ENCODE measurements at regions of chr4 and their contacts with region 1.

Region 1: GRCh38 chr4:88284439-88285234 is at the start of gene PPM1K:
- DNase-seq: peak; percentile 98 to 99 (median 99)
- H3K4me3 ChIP-seq: peak within 1 kb of the TSS; percentile 61 to 89 (median 77)
- H3K4me3 Mint-ChIP-seq: peak within 1 kb of the TSS; percentile 98
- H3K27ac ChIP-seq: peak within 1 kb of the TSS; percentile 92
- H3K27ac Mint-ChIP-seq: peak within 1 kb of the TSS; percentile 96 to 99 (median 98)
- H3K4me1 ChIP-seq: peaks cover 20 to 21% of the 10 kb centered on the region in 2 donors
- H3K4me1 Mint-ChIP-seq: peaks cover 29% of the 10 kb centered on the region
- H3K27me3 ChIP-seq: no peaks in the 10 kb centered on the region
- H3K27me3 Mint-ChIP-seq: no peaks in the 10 kb centered on the region
- CTCF ChIP-seq: no peak
- polyA plus RNA-seq, gene PPM1K: 5.7 to 11.0 (median 7.0) TPM

Region 2: DNA sequence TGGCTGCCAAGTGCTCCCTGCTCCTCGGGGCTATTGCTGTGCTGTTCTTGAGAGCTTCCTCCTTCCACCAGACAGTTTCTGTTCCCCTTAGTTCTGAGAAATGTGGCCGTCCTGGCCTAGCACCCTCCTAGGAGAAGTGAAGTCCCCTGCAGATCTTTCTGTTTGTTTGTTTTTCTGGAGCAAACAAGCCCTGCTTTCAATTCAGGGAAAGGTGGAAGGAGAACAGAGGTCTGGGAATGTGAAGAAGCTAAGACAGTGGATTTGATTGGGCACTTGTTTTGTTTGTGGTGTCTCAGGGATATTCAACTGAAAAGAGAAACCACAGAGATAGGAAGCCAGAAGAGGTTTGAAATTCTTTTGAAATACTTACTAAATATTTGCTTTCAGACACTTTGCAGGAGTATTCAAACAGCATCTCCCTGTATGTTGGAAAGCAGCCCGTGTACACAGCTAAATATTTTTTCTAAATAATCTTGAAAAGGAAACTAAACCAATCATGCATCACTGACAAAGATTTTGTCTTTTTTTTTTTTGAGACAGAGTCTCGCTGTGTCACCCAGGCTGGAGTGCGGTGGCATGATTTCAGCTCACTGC is 36.2 kb after region 1 on chr4:
- intact Hi-C with region 1: no loop called
- DNase-seq: peak; percentile 68 to 72 (median 70)
- H3K4me3 ChIP-seq: peak overlapping the region; percentile 2 to 61 (median 37)
- H3K4me3 Mint-ChIP-seq: peak overlapping the region; percentile 53 to 87
- H3K27ac ChIP-seq: peak overlapping the region; percentile 31 to 88
- H3K27ac Mint-ChIP-seq: peak overlapping the region; percentile 80 to 97 (median 96)
- H3K4me1 ChIP-seq: peaks cover 17 to 20% of the 10 kb centered on the region in 2 donors
- H3K4me1 Mint-ChIP-seq: peaks cover 25% of the 10 kb centered on the region
- H3K27me3 ChIP-seq: no peaks in the 10 kb centered on the region
- H3K27me3 Mint-ChIP-seq: no peaks in the 10 kb centered on the region
- CTCF ChIP-seq: no peak

Region 3: DNA sequence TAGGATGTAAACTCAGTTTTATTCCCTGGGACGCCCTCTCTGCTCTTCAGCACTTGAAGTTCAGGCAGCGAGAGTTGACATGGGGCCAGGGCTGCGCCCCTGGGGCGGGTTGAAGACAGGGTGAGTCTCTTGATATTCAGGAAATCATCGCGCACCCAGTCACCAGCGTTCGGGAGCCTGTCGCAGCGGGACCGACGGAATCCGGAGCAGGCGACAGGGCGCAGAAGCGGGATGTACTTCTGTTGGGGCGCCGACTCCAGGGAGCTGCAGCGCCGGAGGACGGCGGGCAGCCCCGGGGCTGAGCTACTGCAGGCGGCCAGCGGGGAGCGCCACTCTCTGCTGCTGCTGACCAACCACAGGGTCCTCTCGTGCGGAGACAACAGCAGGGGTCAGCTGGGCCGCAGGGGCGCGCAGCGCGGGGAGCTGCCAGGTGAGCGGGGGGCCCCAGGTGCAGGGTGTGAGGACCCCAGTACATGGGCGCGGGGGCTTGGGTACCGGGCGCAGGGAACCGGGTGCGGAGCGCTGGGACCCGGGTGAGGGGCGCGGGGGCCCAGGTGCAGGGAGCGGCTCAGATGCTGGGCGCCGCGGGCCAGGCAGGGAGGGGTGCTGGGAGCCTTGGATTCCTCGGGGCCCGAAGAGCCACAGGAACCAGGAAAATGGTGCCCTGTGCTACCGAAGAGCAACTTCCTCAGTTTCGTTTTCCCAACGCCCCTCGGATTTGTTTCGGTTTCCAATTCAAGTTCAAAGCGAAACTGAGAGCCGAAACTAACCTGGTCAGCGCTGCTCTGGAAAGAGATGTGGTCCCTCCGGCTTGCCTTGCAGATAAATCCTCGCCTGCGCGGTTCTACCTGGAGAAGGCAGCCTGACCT is 94.3 kb after region 1 on chr4 and contains the start of gene HERC6:
- intact Hi-C with region 1: loop called (anchors 5 kb)
- DNase-seq: peak; percentile 88 to 92 (median 91)
- H3K4me3 ChIP-seq: peak within 1 kb of the TSS; percentile 56 to 99 (median 68)
- H3K4me3 Mint-ChIP-seq: peak within 1 kb of the TSS; percentile 93 to 97
- H3K27ac ChIP-seq: peak within 1 kb of the TSS; percentile 63 to 98
- H3K27ac Mint-ChIP-seq: peak within 1 kb of the TSS; percentile 84 to 95 (median 91)
- H3K4me1 ChIP-seq: peaks cover 13 to 19% of the 10 kb centered on the region in 2 donors
- H3K4me1 Mint-ChIP-seq: peaks cover 24% of the 10 kb centered on the region
- H3K27me3 ChIP-seq: no peaks in the 10 kb centered on the region
- H3K27me3 Mint-ChIP-seq: peaks cover 1 to 6% (median 2%) of the 10 kb centered on the region in 3 donors
- CTCF ChIP-seq: peak; percentile 88
- polyA plus RNA-seq, gene HERC6: 4.1 to 9.4 (median 6.1) TPM

Region 4: GRCh38 chr4:88456757-88457306 is 172.2 kb after region 1 on chr4 and contains the start of gene HERC5:
- intact Hi-C with region 1: loop called in 1 of 2 experiments (anchors 5 kb)
- DNase-seq: peak; percentile 91 to 93 (median 92)
- H3K4me3 ChIP-seq: peak within 1 kb of the TSS; percentile 62 to 94 (median 90)
- H3K4me3 Mint-ChIP-seq: peak within 1 kb of the TSS; percentile 100
- H3K27ac ChIP-seq: peak within 1 kb of the TSS; percentile 58 to 79
- H3K27ac Mint-ChIP-seq: peak within 1 kb of the TSS; percentile 94 to 99 (median 97)
- H3K4me1 ChIP-seq: peaks cover 11 to 20% of the 10 kb centered on the region in 2 donors
- H3K4me1 Mint-ChIP-seq: peaks cover 17% of the 10 kb centered on the region
- H3K27me3 ChIP-seq: no peaks in the 10 kb centered on the region
- H3K27me3 Mint-ChIP-seq: no peaks in the 10 kb centered on the region
- CTCF ChIP-seq: peak; percentile 29
- polyA plus RNA-seq, gene HERC5: 2.9 to 10.4 (median 8.1) TPM

Region 5: GRCh38 chr4:88591787-88592599 is 307.4 kb after region 1 on chr4 and contains the start of gene HERC3:
- intact Hi-C with region 1: loop called in 1 of 2 experiments (anchors 10 kb)
- DNase-seq: peak; percentile 88 to 92 (median 92)
- H3K4me3 ChIP-seq: peak within 1 kb of the TSS; percentile 76 to 82 (median 78)
- H3K4me3 Mint-ChIP-seq: peak within 1 kb of the TSS; percentile 95 to 97
- H3K27ac ChIP-seq: peak within 1 kb of the TSS; percentile 82 to 96
- H3K27ac Mint-ChIP-seq: peak within 1 kb of the TSS; percentile 90 to 97 (median 94)
- H3K4me1 ChIP-seq: peaks cover 18 to 22% of the 10 kb centered on the region in 2 donors
- H3K4me1 Mint-ChIP-seq: peaks cover 31% of the 10 kb centered on the region
- H3K27me3 ChIP-seq: no peaks in the 10 kb centered on the region
- H3K27me3 Mint-ChIP-seq: peaks cover 3 to 10% (median 6%) of the 10 kb centered on the region in 3 donors
- CTCF ChIP-seq: no peak
- polyA plus RNA-seq, gene HERC3: 30.5 to 36.9 (median 36.7) TPM

Region 6: GRCh38 chr4:89110986-89111832 is 826.6 kb after region 1 on chr4 and contains the start of gene TIGD2:
- intact Hi-C with region 1: loop called in 1 of 2 experiments (anchors 10 kb)
- DNase-seq: peak; percentile 82 to 87 (median 83)
- H3K4me3 ChIP-seq: peak within 1 kb of the TSS; percentile 54 to 96 (median 90)
- H3K4me3 Mint-ChIP-seq: peak within 1 kb of the TSS; percentile 95 to 96
- H3K27ac ChIP-seq: peak within 1 kb of the TSS in 1 of 2 donors; percentile 81
- H3K27ac Mint-ChIP-seq: peak within 1 kb of the TSS; percentile 75 to 93 (median 84)
- H3K4me1 ChIP-seq: peaks cover 15 to 22% of the 10 kb centered on the region in 2 donors
- H3K4me1 Mint-ChIP-seq: peaks cover 22% of the 10 kb centered on the region
- H3K27me3 ChIP-seq: peaks cover 20 to 22% of the 10 kb centered on the region in 2 donors
- H3K27me3 Mint-ChIP-seq: peaks cover 20 to 30% (median 24%) of the 10 kb centered on the region in 3 donors
- CTCF ChIP-seq: peak; percentile 99
- polyA plus RNA-seq, gene TIGD2: 1.00 to 2.4 (median 2.1) TPM

Measured in CD14-positive monocyte (primary cell).